ENCODE measurements at regions of chr2 and their contacts with region 1.

Region 1: GRCh38 chr2:190382851-190383250 is 25.3 kb upstream of the MFSD6 start:
- DNase-seq: peak in 6 of 9 experiments; percentile 15 to 82 (median 30)
- ATAC-seq: peak; percentile 87
- H3K4me3 ChIP-seq: no peak overlapping the region
- H3K4me3 Mint-ChIP-seq: no peak overlapping the region
- H3K27ac ChIP-seq: no peak overlapping the region
- H3K27ac Mint-ChIP-seq: no peak overlapping the region
- H3K4me1 ChIP-seq: no peaks in the 10 kb centered on the region
- H3K4me1 Mint-ChIP-seq: no peaks in the 10 kb centered on the region
- H3K27me3 ChIP-seq: no peaks in the 10 kb centered on the region
- H3K27me3 Mint-ChIP-seq: no peaks in the 10 kb centered on the region
- CTCF ChIP-seq: peak; percentile 66

Region 2: DNA sequence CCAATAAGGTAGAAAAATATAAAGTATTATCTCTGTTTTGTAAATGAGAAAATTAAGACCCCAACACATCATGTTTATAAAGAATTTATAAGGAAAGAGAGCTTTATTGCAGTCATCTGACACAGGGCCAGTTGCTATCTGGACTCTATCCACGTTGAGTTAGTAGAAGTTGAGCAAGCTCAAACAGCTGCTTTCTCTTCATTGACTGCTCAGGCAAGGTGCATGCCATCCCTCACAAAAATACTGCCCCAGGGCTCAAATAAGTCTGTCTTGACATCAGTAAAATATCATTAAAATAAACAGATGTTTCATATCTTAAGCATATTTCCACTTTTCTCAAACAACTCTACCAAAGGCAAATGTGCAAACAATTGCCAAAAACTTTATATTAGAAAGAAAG is 1218.1 kb before region 1 on chr2:
- CTCF ChIA-PET with region 1: no interaction called
- POLR2A ChIA-PET with region 1: no interaction called
- intact Hi-C with region 1: no loop called
- DNase-seq: no peak
- ATAC-seq: no peak
- H3K4me3 ChIP-seq: no peak overlapping the region
- H3K4me3 Mint-ChIP-seq: no peak overlapping the region
- H3K27ac ChIP-seq: no peak overlapping the region
- H3K27ac Mint-ChIP-seq: no peak overlapping the region
- H3K4me1 ChIP-seq: no peaks in the 10 kb centered on the region
- H3K4me1 Mint-ChIP-seq: no peaks in the 10 kb centered on the region
- H3K27me3 ChIP-seq: no peaks in the 10 kb centered on the region
- H3K27me3 Mint-ChIP-seq: peaks cover 2% of the 10 kb centered on the region
- CTCF ChIP-seq: no peak

Region 3: DNA sequence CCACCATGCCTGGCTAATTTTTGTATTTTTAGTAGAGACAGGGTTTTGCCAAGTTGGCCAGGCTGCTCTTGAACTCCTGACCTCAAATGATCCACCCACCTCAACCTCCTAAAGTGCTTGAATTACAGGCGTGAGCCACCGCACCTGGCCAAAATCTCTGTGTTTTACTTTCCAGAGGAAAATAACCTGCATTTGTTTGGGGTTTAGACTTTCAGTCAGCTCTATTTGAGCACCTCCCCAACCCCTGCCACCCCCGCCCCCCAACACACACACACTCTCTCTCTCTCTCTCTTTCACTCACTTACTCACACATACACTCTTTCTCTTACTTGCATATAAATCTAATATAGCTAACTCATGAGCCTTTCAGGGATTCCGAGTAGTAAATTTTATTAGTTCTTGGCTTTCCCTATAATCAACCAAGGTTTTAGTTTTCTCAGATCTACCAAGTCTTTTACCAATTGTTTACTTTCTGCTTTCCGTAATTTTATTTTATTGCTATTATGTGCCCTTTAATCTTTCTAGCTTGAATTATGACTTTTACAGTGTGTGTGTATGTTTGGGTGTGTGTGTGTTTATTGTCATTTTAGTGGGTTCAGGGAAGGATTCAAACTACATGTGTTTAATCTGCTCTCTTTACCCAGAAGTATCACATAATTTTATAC is 49.8 kb after region 1 on chr2:
- CTCF ChIA-PET with region 1: no interaction called
- POLR2A ChIA-PET with region 1: no interaction called
- intact Hi-C with region 1: loop called in 1 of 2 experiments (anchors 5 kb)
- DNase-seq: no peak
- ATAC-seq: no peak
- H3K4me3 ChIP-seq: no peak overlapping the region
- H3K4me3 Mint-ChIP-seq: no peak overlapping the region
- H3K27ac ChIP-seq: no peak overlapping the region
- H3K27ac Mint-ChIP-seq: peak overlapping the region; percentile 16
- H3K4me1 ChIP-seq: peaks cover 23% of the 10 kb centered on the region
- H3K4me1 Mint-ChIP-seq: peaks cover 69% of the 10 kb centered on the region
- H3K27me3 ChIP-seq: no peaks in the 10 kb centered on the region
- H3K27me3 Mint-ChIP-seq: no peaks in the 10 kb centered on the region
- CTCF ChIP-seq: no peak

Region 4: DNA sequence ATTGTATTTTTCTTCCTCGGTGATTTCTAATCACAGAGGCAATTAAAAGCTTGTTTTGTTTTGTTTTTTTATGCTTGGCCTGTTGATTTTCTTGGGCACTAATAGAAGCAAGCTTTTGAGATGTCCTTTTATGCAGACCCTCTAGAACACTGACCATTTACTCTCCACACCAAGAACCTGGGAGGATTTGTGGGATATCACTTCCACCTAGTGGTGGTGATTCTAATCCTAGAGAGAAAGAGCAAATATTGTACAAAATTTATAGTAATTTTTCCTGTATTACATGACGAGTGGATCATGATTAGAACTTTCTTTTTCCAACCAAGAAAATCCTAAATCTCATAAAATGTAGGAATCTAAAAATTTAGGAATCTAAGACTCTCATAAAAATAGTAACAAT is 128.3 kb after region 1 on chr2:
- CTCF ChIA-PET with region 1: interaction called, 5 read pairs
- POLR2A ChIA-PET with region 1: no interaction called
- intact Hi-C with region 1: loop called (anchors 2 to 5 kb)
- DNase-seq: no peak
- ATAC-seq: no peak
- H3K4me3 ChIP-seq: no peak overlapping the region
- H3K4me3 Mint-ChIP-seq: no peak overlapping the region
- H3K27ac ChIP-seq: no peak overlapping the region
- H3K27ac Mint-ChIP-seq: peak overlapping the region; percentile 62
- H3K4me1 ChIP-seq: peaks cover 9% of the 10 kb centered on the region
- H3K4me1 Mint-ChIP-seq: peaks cover 21% of the 10 kb centered on the region
- H3K27me3 ChIP-seq: no peaks in the 10 kb centered on the region
- H3K27me3 Mint-ChIP-seq: no peaks in the 10 kb centered on the region
- CTCF ChIP-seq: no peak

Region 5: DNA sequence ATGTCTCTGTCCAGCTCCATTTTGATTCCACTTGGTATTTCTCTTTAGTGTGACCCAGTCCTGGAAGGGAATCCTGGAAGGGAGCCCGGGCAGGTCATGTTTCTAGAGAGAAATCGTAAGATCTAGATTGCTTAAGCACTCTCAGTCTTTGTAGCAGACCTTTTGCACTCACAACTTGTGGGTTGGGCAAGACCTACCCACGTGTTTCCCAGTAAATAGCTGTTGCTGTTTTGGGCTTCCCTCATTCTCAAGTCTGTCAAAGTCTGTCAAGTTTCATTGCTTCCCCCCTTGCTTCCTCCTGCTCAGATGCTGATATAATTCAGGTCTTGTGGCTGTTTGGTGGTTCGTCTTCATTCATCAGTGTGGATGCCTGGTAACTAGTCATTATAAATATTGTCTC is 169.1 kb after region 1 on chr2:
- CTCF ChIA-PET with region 1: no interaction called
- POLR2A ChIA-PET with region 1: no interaction called
- intact Hi-C with region 1: loop called in 1 of 2 experiments (anchors 1 kb)
- DNase-seq: peak in 4 of 9 experiments; percentile 13 to 73 (median 30)
- ATAC-seq: peak; percentile 80
- H3K4me3 ChIP-seq: no peak overlapping the region
- H3K4me3 Mint-ChIP-seq: peak overlapping the region; percentile 35
- H3K27ac ChIP-seq: no peak overlapping the region
- H3K27ac Mint-ChIP-seq: no peak overlapping the region
- H3K4me1 ChIP-seq: no peaks in the 10 kb centered on the region
- H3K4me1 Mint-ChIP-seq: peaks cover 10% of the 10 kb centered on the region
- H3K27me3 ChIP-seq: no peaks in the 10 kb centered on the region
- H3K27me3 Mint-ChIP-seq: no peaks in the 10 kb centered on the region
- CTCF ChIP-seq: no peak